ENCODE measurements at regions of chr1 and their contacts with region 1.

Region 1: DNA sequence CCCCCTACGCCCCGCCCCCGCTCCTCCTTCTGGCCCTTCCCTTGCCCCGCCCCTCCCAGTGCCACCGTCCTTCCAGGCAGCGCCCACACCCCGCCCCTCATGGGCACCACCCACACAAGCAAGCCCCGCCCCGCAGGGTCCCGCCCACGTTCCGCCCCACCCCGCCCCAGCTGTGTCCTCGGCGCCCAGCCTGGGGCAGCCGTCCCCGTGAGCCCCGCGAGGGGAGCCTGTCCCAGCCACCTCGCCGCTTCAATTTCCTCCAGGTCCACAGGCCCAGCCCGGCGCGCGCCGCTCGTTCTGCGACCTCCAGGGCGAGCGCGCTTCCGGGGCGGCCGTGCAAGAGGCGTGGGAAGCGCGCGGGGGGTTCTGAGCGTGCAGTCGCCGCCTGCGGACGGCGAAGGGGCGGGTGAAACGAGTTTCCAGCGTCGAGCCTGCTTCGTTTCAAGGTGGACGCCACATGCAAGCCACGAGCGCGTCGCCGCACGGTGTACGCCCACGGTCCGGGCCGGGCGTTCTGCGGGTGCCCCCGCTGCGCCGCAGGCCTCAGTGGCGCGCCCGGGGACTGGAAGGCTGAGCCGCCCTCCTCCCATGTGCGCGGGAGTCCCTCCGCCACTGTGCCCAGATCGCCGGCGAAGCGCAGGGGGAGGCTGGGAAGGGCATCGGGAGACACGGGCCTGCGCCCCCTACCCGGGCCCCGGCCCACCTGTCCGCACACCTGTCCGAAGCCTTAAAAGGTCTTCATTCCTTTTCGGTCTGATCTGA is 10.8 kb upstream of the FAAP20 start:
- DNase-seq: peak; percentile 94 to 96
- H3K4me3 ChIP-seq: peak overlapping the region; percentile 36 to 74 (median 47)
- H3K27ac ChIP-seq: peak overlapping the region; percentile 78 to 94
- H3K4me1 ChIP-seq: peaks cover 12 to 15% of the 10 kb centered on the region in 2 donors
- H3K27me3 ChIP-seq: no peaks in the 10 kb centered on the region
- CTCF ChIP-seq: peak in 2 of 3 donors; percentile 12 to 26
- POLR2A ChIP-seq: no peak

Region 2: DNA sequence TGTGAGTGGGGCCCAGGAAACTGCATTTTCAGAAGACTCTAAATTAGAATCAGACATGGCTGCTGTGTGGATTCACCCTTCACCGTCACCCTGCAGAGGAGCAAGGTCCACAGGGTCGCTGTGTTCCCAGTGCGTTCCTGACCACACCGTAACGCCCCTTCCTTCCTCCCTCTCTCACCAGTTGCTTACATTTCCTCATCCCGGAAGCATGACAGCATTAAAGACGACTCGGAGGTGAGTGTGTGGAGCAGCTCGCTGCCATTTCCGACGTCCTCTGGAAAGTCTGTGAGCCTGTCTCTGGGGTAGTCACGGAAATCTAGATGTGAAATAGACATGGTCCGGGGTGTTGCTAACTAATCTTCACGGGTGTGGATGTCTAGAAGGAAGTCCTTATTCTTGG is 56.7 kb before region 1 on chr1:
- intact Hi-C with region 1: no loop called
- DNase-seq: no peak
- H3K4me3 ChIP-seq: no peak overlapping the region
- H3K27ac ChIP-seq: no peak overlapping the region
- H3K4me1 ChIP-seq: no peaks in the 10 kb centered on the region
- H3K27me3 ChIP-seq: no peaks in the 10 kb centered on the region
- CTCF ChIP-seq: no peak
- POLR2A ChIP-seq: no peak

Region 3: GRCh38 chr1:2391041-2391930 is 185.9 kb after region 1 on chr1 and contains the starts of genes MORN1 and RER1:
- intact Hi-C with region 1: loop called (anchors 5 kb)
- DNase-seq: peak; percentile 98 to 99
- H3K4me3 ChIP-seq: peak within 1 kb of the TSS; percentile 87 to 96 (median 92)
- H3K27ac ChIP-seq: peak within 1 kb of the TSS; percentile 90 to 95
- H3K4me1 ChIP-seq: peaks cover 4 to 16% of the 10 kb centered on the region in 2 donors
- H3K27me3 ChIP-seq: no peaks in the 10 kb centered on the region
- CTCF ChIP-seq: no peak
- POLR2A ChIP-seq: peak; percentile 43
- total RNA-seq, gene MORN1: 4.0 to 18.1 (median 17.7) TPM
- total RNA-seq, gene RER1: 58.3 to 75.1 (median 70.4) TPM